Activated CD4-positive, alpha-beta T cell treated with anti-CD3 and anti-CD28 coated beads for 36 hours (primary cell): ENCODE measurements at regions of chr13 and their contacts with region 1.

Region 1: DNA sequence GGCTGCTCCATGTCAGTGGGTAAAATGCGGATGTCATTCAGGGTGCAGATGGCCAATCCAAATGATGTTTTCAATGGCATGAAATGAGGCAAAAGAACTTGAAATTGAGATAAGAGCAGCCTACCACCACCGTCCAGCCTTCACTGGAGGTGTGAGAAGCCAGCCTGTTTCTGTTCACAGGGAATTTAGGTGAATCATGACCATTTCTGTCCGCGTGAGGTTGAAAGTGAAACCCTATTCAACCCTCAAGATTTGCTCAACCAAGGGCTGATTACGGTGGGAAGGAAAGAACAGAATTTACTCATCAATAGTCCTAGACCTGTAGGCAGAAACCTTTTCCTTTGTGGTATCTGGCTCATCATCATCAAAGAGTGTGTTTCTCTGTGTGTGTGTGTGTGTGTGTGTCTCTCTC is 370.7 kb downstream of the COG6 start:
- DNase-seq: peak; percentile 79
- ATAC-seq: peak; percentile 82
- H3K4me3 Mint-ChIP-seq: peak overlapping the region; percentile 25
- H3K27ac Mint-ChIP-seq: peak overlapping the region; percentile 28
- H3K4me1 Mint-ChIP-seq: peaks cover 48% of the 10 kb centered on the region
- H3K27me3 Mint-ChIP-seq: no peaks in the 10 kb centered on the region

Region 2: GRCh38 chr13:39777527-39778061 is 248.6 kb before region 1 on chr13:
- CTCF ChIA-PET with region 1: interaction called, 4 read pairs
- POLR2A ChIA-PET with region 1: no interaction called
- intact Hi-C with region 1: loop called (anchors 1 to 2 kb)
- DNase-seq: peak; percentile 70
- ATAC-seq: peak; percentile 83
- H3K4me3 Mint-ChIP-seq: peak overlapping the region; percentile 5
- H3K27ac Mint-ChIP-seq: peak overlapping the region; percentile 96
- H3K4me1 Mint-ChIP-seq: peaks cover 54% of the 10 kb centered on the region
- H3K27me3 Mint-ChIP-seq: no peaks in the 10 kb centered on the region

Region 3: GRCh38 chr13:39892721-39893685 is 133.2 kb before region 1 on chr13:
- CTCF ChIA-PET with region 1: no interaction called
- POLR2A ChIA-PET with region 1: no interaction called
- intact Hi-C with region 1: no loop called
- DNase-seq: peak; percentile 51
- ATAC-seq: peak; percentile 79
- H3K4me3 Mint-ChIP-seq: peak overlapping the region; percentile 37
- H3K27ac Mint-ChIP-seq: peak overlapping the region; percentile 77
- H3K4me1 Mint-ChIP-seq: peaks cover 34% of the 10 kb centered on the region
- H3K27me3 Mint-ChIP-seq: no peaks in the 10 kb centered on the region

Region 4: GRCh38 chr13:39998166-39998565 is 28.0 kb before region 1 on chr13:
- CTCF ChIA-PET with region 1: interaction called, 3 read pairs
- POLR2A ChIA-PET with region 1: no interaction called
- intact Hi-C with region 1: loop called in 1 of 2 experiments (anchors 1 kb)
- DNase-seq: peak; percentile 33
- ATAC-seq: peak; percentile 96
- H3K4me3 Mint-ChIP-seq: peak overlapping the region; percentile 32
- H3K27ac Mint-ChIP-seq: peak overlapping the region; percentile 84
- H3K4me1 Mint-ChIP-seq: peaks cover 31% of the 10 kb centered on the region
- H3K27me3 Mint-ChIP-seq: no peaks in the 10 kb centered on the region

Region 5: DNA sequence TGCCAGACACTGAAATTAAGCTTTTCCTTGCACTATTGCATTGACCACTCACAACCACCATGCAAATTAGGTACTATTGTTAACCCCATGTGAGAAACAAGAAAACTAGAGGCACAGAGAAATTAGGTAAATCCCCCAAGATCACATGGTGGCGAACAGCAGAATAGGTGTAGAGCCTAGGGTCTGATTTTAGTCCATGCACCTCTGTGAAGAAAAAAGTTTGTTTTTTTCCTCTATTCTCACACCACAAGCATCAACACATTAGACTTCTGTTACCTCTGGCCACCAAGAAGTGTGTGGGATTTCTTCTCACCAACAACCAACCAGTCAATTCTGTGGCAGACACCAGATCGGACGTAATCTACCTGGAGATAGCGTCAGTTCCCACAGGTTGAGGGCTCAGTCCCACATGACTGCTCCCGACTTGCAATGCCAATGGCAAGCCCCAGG is 21.2 kb after region 1 on chr13:
- CTCF ChIA-PET with region 1: no interaction called
- POLR2A ChIA-PET with region 1: no interaction called
- intact Hi-C with region 1: no loop called
- DNase-seq: no peak
- ATAC-seq: no peak
- H3K4me3 Mint-ChIP-seq: no peak overlapping the region
- H3K27ac Mint-ChIP-seq: no peak overlapping the region
- H3K4me1 Mint-ChIP-seq: no peaks in the 10 kb centered on the region
- H3K27me3 Mint-ChIP-seq: peaks cover 2% of the 10 kb centered on the region

Region 6: GRCh38 chr13:40149611-40150274 is 123.6 kb after region 1 on chr13:
- CTCF ChIA-PET with region 1: no interaction called
- POLR2A ChIA-PET with region 1: no interaction called
- intact Hi-C with region 1: loop called (anchors 1 to 5 kb)
- DNase-seq: peak; percentile 33
- ATAC-seq: peak; percentile 9
- H3K4me3 Mint-ChIP-seq: no peak overlapping the region
- H3K27ac Mint-ChIP-seq: peak overlapping the region; percentile 66
- H3K4me1 Mint-ChIP-seq: peaks cover 72% of the 10 kb centered on the region
- H3K27me3 Mint-ChIP-seq: no peaks in the 10 kb centered on the region

Region 7: DNA sequence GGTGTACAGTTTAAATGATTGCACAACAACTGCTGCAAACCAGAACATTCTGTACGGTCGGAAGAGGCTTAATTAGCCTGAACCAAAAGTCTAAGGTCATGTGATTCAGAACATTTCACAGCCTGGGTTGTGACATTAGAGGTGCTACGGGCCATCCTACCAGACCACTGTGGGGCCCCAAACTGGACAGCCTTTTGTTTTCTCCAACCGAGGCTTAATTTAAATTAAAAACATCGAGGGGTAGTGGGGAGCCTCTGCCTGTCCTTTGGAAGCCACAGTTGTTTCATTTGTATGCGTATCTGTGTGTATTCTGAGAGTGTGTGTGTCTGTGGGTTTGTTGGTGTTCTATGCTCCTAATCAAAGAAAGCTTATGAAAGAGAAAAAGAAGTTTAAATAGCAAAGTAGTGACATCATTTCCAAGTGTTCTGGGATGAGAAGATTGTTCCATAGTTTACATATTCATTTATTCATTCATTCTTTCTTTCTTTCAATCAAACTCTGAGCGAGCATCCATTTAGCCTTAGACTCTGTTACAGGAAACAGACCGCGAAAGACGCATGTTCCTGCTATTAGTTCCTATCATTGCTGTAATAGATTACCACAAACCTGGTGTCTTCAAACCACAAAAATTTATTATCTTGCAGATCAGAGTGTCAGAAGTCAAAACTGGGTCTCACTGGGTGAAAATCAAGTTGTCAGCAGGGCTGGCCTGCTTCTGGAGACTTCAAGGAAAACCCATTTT is 195.5 kb after region 1 on chr13:
- CTCF ChIA-PET with region 1: no interaction called
- POLR2A ChIA-PET with region 1: no interaction called
- intact Hi-C with region 1: loop called in 1 of 2 experiments (anchors 1 kb)
- DNase-seq: peak; percentile 62
- ATAC-seq: peak; percentile 63
- H3K4me3 Mint-ChIP-seq: peak overlapping the region; percentile 45
- H3K27ac Mint-ChIP-seq: peak overlapping the region; percentile 91
- H3K4me1 Mint-ChIP-seq: peaks cover 61% of the 10 kb centered on the region
- H3K27me3 Mint-ChIP-seq: no peaks in the 10 kb centered on the region

Region 8: DNA sequence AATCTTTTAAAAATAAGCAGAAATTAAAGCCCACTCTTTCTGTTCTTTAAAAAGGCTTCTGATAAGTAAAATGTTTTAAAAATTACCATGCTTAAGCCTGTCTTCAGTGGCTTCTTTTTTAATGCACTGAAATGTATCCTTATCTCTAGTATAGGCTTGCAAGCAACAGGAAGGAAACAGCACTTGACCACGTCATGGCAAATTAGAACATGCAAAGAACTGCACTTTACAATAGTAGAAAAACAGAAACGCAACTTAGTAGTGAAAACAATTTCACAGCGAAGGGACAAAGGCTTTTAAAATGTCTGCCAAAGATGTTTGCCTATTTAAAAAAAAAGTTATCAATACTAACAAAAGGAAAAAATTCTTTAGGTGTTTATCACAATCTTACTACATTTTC is 956.6 kb after region 1 on chr13:
- CTCF ChIA-PET with region 1: no interaction called
- POLR2A ChIA-PET with region 1: no interaction called
- intact Hi-C with region 1: loop called in 1 of 2 experiments (anchors 10 kb)
- DNase-seq: peak; percentile 70
- ATAC-seq: peak; percentile 62
- H3K4me3 Mint-ChIP-seq: peak overlapping the region; percentile 91
- H3K27ac Mint-ChIP-seq: peak overlapping the region; percentile 92
- H3K4me1 Mint-ChIP-seq: peaks cover 66% of the 10 kb centered on the region
- H3K27me3 Mint-ChIP-seq: no peaks in the 10 kb centered on the region